Activated naive CD8-positive, alpha-beta T cell treated with anti-CD3 and anti-CD28 coated beads, Interleukin-2, amount 10 ng/mL, durations not matched to agents 7 days and 5 days (primary cell): ENCODE measurements at regions of chr4 and their contacts with region 1.

Region 1: GRCh38 chr4:6709230-6710114 is at the start of gene MRFAP1L1:
- DNase-seq: peak; percentile 95
- ATAC-seq: peak; percentile 76
- H3K4me3 Mint-ChIP-seq: peak within 1 kb of the TSS; percentile 97
- H3K27ac Mint-ChIP-seq: peak within 1 kb of the TSS; percentile 99
- H3K4me1 Mint-ChIP-seq: peaks cover 48% of the 10 kb centered on the region
- H3K27me3 Mint-ChIP-seq: peaks cover 4% of the 10 kb centered on the region
- total RNA-seq, gene MRFAP1L1: 74.6 to 80.0 TPM

Region 2: DNA sequence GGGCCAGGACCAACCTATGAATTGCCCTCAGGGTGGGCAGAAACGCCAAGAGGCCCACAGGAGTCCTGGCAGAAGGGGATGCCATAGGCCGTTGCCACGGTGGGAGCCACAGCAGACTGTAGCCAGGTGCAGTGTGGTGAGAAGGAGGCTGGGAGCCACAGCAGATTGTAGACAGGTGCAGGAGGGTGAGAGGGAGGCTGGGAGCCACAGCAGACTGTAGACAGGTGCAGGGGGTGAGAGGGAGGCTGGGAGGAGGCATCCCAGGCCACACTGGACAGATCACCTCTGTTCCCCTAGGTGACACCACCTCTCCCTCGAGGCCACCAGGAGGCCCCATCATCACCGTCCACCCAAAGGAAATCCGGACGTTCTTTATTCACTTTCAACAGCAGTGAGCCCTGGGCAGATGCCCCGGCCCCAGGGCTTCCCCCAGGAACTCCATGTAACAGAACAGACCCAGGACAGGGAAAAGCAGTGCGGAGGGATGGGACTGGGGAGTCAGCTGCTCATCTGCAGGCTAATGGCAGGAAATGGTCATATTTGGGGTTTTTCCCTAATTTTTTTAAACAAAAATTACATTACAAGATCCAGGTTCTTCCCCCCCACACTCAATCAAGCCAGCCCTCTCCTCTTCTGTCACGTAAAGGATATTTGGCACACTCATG is 88.4 kb before region 1 on chr4:
- POLR2A ChIA-PET with region 1: no interaction called
- DNase-seq: no peak
- ATAC-seq: no peak
- H3K4me3 Mint-ChIP-seq: no peak overlapping the region
- H3K27ac Mint-ChIP-seq: no peak overlapping the region
- H3K4me1 Mint-ChIP-seq: no peaks in the 10 kb centered on the region
- H3K27me3 Mint-ChIP-seq: no peaks in the 10 kb centered on the region

Region 3: DNA sequence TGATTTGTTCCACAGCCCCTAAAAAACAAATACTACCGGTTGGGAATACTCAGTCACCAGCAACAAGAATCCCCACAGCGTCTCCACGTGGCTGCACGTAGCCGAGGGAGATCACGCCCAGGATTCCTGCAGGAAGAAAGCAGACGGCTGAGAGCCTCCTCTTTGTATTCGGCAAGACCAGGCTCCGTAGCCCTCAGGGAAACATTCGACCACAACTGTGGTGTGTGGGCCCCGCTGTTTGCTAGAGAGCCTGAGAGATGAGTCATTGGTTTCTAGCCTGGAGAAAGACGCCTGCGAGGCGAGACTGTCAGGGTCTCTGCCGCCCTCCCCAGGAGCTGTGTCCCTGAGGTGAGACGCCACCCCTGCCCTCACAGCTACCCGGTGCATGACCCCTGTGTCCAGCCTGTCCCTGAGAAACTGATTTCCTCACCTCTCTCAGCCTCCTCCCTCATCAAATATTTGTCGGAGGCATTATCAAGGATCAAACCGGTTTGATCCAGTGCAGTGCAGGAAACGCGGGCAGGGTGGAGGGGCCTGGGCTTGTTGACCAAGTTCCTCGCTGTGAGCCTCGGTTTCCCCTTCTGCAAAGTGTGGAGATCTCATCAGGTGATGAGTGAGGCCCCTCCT is 20.5 kb before region 1 on chr4:
- POLR2A ChIA-PET with region 1: interaction called, 49 read pairs
- DNase-seq: peak; percentile 82
- ATAC-seq: peak; percentile 77
- H3K4me3 Mint-ChIP-seq: peak overlapping the region; percentile 87
- H3K27ac Mint-ChIP-seq: peak overlapping the region; percentile 92
- H3K4me1 Mint-ChIP-seq: peaks cover 61% of the 10 kb centered on the region
- H3K27me3 Mint-ChIP-seq: no peaks in the 10 kb centered on the region

Region 4: DNA sequence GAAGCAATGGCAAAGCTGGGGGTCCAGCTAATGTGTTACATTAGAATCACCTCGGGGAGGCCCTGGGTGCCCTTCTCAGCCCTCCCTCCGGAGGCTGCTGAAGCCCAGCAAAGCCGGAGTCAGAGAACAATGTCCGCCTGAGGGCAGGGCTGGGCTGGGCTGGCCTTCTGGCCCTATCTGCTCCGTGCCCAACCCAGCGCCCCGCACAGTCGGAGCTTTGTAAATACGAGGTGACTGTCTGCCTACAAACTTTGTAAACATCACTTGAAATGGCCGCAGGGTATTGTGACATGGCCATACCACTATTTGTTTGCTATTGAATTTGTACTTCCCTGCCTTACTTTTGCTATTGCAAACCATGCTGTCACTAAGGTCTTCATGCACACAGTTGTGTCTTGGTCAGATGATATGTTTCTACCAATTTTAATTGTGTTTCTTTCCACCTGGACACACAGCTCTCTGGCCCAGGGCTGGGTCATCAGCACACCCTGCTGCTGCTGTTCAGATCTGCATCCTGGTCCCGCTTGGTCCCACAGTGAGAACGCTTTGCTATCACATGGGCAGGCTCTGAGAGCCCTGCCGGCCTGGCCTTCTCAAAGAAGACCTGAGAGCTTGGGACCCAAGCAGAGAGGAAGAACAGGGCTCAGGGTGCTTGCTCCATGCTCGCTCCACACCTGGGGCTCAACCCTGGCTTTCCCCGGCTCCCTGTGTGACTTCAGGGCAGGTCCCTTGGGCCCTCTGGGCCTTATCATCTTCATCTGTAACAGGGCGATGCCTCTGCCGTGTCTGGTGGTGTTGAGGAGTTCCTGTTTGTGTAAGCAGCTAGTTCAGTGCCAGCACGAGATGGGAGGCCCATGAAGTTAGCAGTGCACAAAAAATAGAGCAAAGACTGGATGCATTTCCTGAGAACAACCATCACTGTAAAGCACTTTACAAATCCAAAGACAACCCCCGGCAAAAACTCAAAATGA is 13.5 kb before region 1 on chr4:
- POLR2A ChIA-PET with region 1: interaction called, 49 read pairs
- DNase-seq: peak; percentile 60
- ATAC-seq: peak; percentile 83
- H3K4me3 Mint-ChIP-seq: peak overlapping the region; percentile 68
- H3K27ac Mint-ChIP-seq: peak overlapping the region; percentile 97
- H3K4me1 Mint-ChIP-seq: peaks cover 56% of the 10 kb centered on the region
- H3K27me3 Mint-ChIP-seq: no peaks in the 10 kb centered on the region